ENCODE measurements at regions of chr11 and their contacts with region 1.

Region 1: DNA sequence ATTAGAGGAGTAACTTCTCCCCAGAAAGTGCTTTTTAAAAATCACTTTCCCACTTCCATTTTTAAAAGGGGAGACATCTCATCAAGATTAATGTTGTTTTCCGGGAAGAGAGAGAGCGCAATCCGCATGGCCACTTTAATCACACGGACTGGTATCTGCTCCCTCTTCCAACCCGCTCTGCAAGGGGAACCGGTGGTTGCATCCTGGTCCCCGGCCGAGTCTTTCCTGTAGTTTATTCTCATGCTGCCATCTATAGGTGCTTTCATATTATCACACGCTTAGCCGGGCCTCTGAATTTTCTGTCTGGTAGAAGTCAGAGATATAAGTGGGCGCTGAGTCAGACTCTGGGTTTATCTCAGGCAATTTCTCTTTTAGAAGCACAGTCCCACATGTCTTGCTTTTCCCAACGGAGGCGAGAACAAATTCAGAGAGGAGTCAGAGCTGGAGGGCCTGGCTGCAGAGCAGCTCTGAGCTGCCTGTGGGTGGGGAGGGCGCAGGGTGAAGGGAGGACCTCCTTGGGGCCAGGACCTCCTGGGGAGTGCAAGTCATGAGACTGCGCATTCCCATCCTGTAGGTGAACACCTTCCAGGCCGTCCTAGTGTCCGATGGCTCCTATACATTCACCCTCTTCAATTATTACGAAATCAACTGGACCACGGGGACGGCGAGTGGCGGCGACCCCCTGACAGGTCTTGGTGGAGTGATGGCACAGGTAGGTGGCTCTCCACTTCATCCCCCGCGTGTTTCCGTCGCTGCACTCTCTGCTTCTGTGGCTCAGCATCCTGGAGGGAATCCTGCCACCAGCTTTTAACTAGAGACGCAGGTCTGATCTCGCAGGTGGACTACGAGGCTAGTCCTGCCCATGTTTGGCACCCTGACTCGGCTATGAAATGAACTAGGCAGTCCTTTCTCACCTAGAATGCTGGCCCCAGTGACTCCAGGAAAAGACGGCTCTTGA is 11.7 kb downstream of the TECTA start:
- DNase-seq: peak; percentile 71
- ATAC-seq: peak; percentile 92

Region 2: DNA sequence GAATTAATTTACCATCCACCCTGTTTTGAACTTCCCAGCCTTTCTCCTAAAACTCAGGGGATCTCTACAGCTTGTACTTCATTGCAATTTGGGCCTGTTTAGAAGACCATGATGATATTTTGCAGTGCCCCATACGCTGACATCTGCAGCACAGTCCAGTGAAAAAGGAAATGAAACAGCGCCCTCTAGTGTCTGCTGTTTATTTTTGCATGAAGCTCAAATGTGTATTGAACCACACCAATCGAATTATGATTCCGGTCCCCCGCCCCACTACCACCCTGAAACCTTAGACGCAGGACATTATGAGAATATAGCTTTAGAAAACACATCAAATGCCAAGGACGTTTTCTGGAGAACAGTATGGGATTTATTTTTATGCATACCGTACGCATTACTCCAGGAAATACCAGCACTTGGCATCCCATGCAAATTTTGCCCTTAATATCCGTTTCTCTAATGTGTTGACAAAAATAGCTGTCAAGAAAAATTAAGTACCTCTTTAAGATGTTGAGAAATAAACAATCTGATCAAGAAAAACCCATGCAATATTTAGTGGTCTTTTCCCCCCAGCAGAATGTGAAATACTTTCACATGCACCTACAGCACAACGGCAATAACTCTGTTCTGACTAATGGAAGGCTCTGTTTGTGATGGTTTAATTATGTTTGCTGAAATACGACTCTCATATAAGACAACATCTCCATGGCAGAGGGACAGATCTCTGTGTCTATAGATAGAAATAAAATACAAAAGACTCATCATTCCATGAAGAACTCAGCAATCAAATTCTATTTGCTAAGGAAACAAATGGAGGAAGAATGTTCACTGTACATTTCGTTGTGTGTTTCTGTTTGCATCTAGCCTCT is 82.2 kb after region 1 on chr11:
- intact Hi-C with region 1: loop called (anchors 10 kb)
- DNase-seq: no peak
- ATAC-seq: peak; percentile 74